Calu3 (cell line): ENCODE measurements at regions of chr18 and their contacts with region 1.

Region 1: GRCh38 chr18:21798126-21798525 is 57.5 kb downstream of the MIB1 start:
- DNase-seq: no peak
- H3K4me3 Mint-ChIP-seq: no peak overlapping the region
- H3K27ac Mint-ChIP-seq: no peak overlapping the region
- H3K4me1 Mint-ChIP-seq: peaks cover 25% of the 10 kb centered on the region
- H3K27me3 Mint-ChIP-seq: no peaks in the 10 kb centered on the region
- CTCF ChIP-seq: no peak

Region 2: GRCh38 chr18:21826196-21826595 is 28.1 kb after region 1 on chr18:
- CTCF ChIA-PET with region 1: no interaction called
- intact Hi-C with region 1: loop called (anchors 2 kb)
- DNase-seq: no peak
- H3K4me3 Mint-ChIP-seq: no peak overlapping the region
- H3K27ac Mint-ChIP-seq: no peak overlapping the region
- H3K4me1 Mint-ChIP-seq: no peaks in the 10 kb centered on the region
- H3K27me3 Mint-ChIP-seq: no peaks in the 10 kb centered on the region
- CTCF ChIP-seq: no peak